B cell (primary cell): ENCODE measurements at regions of chr9 and their contacts with region 1.

Region 1: DNA sequence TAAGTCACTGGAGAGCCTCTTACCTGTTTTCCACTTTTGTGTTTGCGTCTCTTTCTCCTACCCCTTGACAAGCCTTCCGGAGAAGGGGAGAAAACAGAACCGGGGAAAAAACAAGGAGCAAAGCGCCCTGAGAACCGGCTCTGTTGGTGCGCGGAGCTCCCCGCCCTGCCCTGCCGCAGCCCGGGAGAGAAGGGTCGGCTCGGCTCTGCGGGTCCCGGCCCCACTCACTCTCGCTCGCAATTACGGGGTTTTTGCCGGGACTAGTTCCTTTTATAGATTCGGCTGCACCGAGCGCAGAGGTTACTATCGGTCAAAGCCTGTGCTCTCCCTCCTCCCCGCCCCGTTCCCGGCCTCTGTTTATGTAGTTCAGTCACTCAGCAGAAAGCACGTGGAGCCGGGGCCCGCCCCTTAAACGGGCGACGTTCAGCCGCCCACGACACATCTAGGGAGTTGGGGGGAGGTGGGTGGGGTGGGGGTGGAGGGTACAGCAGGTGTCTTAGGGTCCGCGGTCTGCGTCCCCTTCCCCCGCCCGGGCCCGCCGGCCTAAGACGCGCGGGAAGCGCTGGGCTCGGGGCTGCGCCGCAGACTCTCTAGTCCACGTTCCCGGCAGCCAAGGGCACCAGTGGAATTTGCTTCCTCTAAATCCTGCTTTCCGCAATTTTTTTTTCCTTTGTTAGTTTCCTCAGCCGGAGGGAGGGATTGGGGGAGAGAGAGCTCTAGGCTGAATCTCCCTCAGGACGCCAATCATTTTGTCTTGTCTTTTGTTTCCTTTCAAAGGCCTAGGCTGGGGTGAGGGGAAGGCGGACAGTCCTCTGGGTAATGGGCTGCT is at the start of gene ABCA1:
- DNase-seq: peak; percentile 92
- ATAC-seq: peak; percentile 62
- H3K4me3 ChIP-seq: peak within 1 kb of the TSS; percentile 73 to 96 (median 94)
- H3K4me3 Mint-ChIP-seq: peak within 1 kb of the TSS; percentile 98
- H3K27ac ChIP-seq: peak within 1 kb of the TSS; percentile 69 to 72
- H3K27ac Mint-ChIP-seq: peak within 1 kb of the TSS; percentile 88
- H3K4me1 ChIP-seq: peaks cover 31 to 41% of the 10 kb centered on the region in 2 donors
- H3K4me1 Mint-ChIP-seq: peaks cover 42% of the 10 kb centered on the region
- H3K27me3 ChIP-seq: no peaks in the 10 kb centered on the region
- H3K27me3 Mint-ChIP-seq: no peaks in the 10 kb centered on the region
- CTCF ChIP-seq: no peak
- total RNA-seq, gene ABCA1: 22.8 and 24.0 TPM in 2 replicates

Region 2: GRCh38 chr9:104863180-104863883 is 64.8 kb before region 1 on chr9:
- CTCF ChIA-PET with region 1: interaction called, 33 read pairs
- POLR2A ChIA-PET with region 1: interaction called, 18 read pairs
- intact Hi-C with region 1: loop called (anchors 1 kb)
- DNase-seq: peak; percentile 71
- ATAC-seq: peak; percentile 72
- H3K4me3 ChIP-seq: no peak overlapping the region
- H3K4me3 Mint-ChIP-seq: no peak overlapping the region
- H3K27ac ChIP-seq: no peak overlapping the region
- H3K27ac Mint-ChIP-seq: peak overlapping the region; percentile 1
- H3K4me1 ChIP-seq: peaks cover 27 to 51% of the 10 kb centered on the region in 2 donors
- H3K4me1 Mint-ChIP-seq: peaks cover 50% of the 10 kb centered on the region
- H3K27me3 ChIP-seq: no peaks in the 10 kb centered on the region
- H3K27me3 Mint-ChIP-seq: no peaks in the 10 kb centered on the region
- CTCF ChIP-seq: peak; percentile 82

Region 3: GRCh38 chr9:104895572-104895971 is 32.6 kb before region 1 on chr9:
- CTCF ChIA-PET with region 1: interaction called, 5 read pairs
- POLR2A ChIA-PET with region 1: interaction called, 3 read pairs
- intact Hi-C with region 1: loop called (anchors 2 kb)
- DNase-seq: no peak
- ATAC-seq: no peak
- H3K4me3 ChIP-seq: no peak overlapping the region
- H3K4me3 Mint-ChIP-seq: no peak overlapping the region
- H3K27ac ChIP-seq: no peak overlapping the region
- H3K27ac Mint-ChIP-seq: no peak overlapping the region
- H3K4me1 ChIP-seq: no peaks in the 10 kb centered on the region
- H3K4me1 Mint-ChIP-seq: peaks cover 6% of the 10 kb centered on the region
- H3K27me3 ChIP-seq: no peaks in the 10 kb centered on the region
- H3K27me3 Mint-ChIP-seq: no peaks in the 10 kb centered on the region
- CTCF ChIP-seq: no peak

Region 4: GRCh38 chr9:104991144-104991953 is 63.2 kb after region 1 on chr9:
- CTCF ChIA-PET with region 1: interaction called, 12 read pairs
- POLR2A ChIA-PET with region 1: interaction called, 13 read pairs
- intact Hi-C with region 1: loop called (anchors 1 kb)
- DNase-seq: peak; percentile 91
- ATAC-seq: peak; percentile 86
- H3K4me3 ChIP-seq: peak overlapping the region; percentile 61 to 88 (median 78)
- H3K4me3 Mint-ChIP-seq: peak overlapping the region; percentile 93
- H3K27ac ChIP-seq: peak overlapping the region; percentile 79 to 83
- H3K27ac Mint-ChIP-seq: peak overlapping the region; percentile 88
- H3K4me1 ChIP-seq: peaks cover 17 to 30% of the 10 kb centered on the region in 2 donors
- H3K4me1 Mint-ChIP-seq: peaks cover 32% of the 10 kb centered on the region
- H3K27me3 ChIP-seq: peaks cover 0 to 6% (median 1%) of the 10 kb centered on the region in 4 experiments
- H3K27me3 Mint-ChIP-seq: peaks cover 9% of the 10 kb centered on the region
- CTCF ChIP-seq: no peak

Region 5: DNA sequence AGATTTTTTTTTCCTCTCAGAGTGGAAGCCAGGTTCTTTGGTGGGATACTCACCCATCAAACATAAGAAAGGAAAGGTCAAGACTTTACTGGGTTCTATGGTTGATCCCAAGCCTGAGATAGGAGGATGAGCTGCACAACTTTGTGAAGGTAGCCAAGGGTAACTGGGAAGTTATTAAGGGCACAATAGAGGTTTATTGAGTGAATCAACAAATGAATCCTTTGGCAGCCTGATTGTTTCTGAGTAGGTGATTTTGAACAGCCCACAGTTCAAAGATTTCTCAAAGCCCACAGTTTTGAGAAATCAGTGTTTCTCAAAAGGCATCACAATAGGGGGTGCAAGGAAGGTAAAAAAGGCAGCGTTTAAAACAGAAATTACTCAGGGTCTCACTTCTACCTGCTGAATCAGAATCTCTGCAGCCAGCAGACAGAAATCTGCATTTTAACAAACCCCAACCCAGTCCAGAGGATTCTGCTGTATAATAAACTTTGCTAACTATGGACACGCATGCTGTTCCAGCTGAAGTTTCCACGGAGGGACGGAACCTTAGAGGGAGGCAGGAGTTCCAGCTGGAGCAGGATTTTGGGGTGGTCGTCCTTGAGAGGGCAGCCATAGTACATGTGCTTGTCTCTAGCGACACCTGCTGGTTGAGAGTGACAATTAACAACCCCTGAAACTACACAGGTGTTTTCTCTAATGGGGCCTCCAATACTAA is 487.0 kb after region 1 on chr9:
- CTCF ChIA-PET with region 1: interaction called, 5 read pairs
- POLR2A ChIA-PET with region 1: no interaction called
- intact Hi-C with region 1: loop called (anchors 1 kb)
- DNase-seq: peak; percentile 77
- ATAC-seq: peak; percentile 81
- H3K4me3 ChIP-seq: no peak overlapping the region
- H3K4me3 Mint-ChIP-seq: no peak overlapping the region
- H3K27ac ChIP-seq: no peak overlapping the region
- H3K27ac Mint-ChIP-seq: no peak overlapping the region
- H3K4me1 ChIP-seq: peaks cover 3 to 4% of the 10 kb centered on the region in 2 donors
- H3K4me1 Mint-ChIP-seq: peaks cover 4% of the 10 kb centered on the region
- H3K27me3 ChIP-seq: no peaks in the 10 kb centered on the region
- H3K27me3 Mint-ChIP-seq: no peaks in the 10 kb centered on the region
- CTCF ChIP-seq: peak; percentile 94